Posterior cingulate gyrus (tissue), 11 donors: ENCODE measurements at regions of chr7 and their contacts with region 1.

Region 1: DNA sequence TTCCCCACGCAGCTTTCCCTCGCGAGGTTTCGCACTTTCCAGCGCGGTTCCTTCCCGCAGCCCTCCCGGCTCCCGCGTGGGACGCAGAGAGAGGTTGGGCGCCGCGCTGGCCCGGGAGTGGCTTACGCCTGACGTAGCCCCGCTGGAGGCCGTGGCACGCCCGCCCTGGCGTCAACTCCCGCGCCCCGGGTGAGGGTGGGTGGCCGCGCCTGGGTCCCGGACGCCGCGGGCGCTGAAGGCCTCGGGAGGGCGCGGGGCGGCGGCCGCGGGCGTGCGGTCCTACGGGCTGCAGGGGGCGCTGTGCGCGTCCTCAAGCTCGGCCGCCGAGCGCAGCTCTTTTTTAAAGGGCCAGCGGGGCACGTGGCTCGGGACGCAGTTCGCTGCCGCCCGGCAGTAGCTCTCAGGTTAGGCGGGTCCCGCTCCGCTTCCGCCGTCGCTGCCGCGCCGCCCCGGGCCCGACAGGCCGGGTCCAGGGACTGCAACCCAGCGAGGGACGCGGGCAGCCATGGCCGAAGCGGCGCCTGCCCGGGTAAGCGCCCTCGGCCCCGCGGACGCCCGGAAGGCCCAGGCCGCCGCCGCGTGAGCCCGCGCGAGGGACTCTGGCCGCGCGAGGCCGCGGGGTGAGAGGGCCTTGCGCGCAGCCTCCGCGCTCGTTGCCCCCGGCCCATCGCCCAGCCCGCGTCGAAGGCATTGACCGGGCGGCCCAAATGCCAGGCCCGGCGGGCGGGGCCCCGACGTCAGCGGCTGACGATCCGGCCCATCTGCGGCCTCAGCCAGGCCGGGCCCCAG is at the start of gene ZNF783:
- DNase-seq: peak; percentile 72 to 97 (median 82)

Region 2: DNA sequence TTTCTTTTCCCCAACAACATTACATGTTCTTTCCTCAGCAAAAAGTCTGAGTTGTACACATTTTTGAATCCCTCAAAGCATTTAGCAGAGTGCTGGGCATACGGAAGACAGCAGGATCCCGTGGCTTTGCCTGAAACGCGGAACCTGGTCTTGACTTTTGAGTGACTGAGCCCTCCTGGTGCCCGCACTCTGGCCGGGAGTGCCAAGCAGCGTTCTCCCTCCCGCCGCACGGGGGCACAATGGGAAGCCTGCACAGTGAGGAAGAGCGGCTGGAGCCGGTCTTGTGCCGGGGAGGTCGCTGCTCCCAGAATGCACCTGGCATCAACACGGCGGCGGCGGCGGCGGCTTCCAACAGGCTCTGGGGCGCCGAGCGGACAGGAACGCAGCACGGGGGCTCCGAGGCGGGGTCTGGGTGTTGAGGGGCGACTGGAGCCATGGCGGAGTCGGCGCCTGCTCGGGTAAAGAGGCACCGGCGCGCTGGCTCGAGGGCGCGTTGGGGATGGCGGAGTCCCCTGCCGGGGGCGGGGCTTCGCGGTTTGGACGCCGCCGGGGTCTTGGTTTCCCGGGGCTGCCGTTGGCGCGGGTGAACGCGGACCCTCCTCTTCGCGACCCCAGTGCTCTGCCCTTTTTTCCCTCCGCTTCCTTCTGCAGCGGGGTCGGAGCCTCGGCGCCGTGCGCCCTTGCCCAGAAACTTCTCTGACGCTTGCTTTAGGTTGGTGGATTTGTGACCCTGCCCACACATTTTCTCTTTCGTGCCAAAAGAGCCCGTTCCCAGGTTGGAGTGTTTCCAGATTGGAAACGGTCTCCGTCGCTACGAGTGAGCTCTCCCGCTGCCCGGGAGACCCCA is 22.5 kb before region 1 on chr7 and contains the start of gene ZNF212:
- intact Hi-C with region 1: loop called (anchors 1 kb)
- DNase-seq: peak; percentile 82 to 98 (median 92)

Region 3: GRCh38 chr7:149497456-149498261 is 235.6 kb after region 1 on chr7 and contains the start of gene ZNF746:
- intact Hi-C with region 1: loop called (anchors 10 kb)
- DNase-seq: peak; percentile 52 to 97 (median 80)

Region 4: DNA sequence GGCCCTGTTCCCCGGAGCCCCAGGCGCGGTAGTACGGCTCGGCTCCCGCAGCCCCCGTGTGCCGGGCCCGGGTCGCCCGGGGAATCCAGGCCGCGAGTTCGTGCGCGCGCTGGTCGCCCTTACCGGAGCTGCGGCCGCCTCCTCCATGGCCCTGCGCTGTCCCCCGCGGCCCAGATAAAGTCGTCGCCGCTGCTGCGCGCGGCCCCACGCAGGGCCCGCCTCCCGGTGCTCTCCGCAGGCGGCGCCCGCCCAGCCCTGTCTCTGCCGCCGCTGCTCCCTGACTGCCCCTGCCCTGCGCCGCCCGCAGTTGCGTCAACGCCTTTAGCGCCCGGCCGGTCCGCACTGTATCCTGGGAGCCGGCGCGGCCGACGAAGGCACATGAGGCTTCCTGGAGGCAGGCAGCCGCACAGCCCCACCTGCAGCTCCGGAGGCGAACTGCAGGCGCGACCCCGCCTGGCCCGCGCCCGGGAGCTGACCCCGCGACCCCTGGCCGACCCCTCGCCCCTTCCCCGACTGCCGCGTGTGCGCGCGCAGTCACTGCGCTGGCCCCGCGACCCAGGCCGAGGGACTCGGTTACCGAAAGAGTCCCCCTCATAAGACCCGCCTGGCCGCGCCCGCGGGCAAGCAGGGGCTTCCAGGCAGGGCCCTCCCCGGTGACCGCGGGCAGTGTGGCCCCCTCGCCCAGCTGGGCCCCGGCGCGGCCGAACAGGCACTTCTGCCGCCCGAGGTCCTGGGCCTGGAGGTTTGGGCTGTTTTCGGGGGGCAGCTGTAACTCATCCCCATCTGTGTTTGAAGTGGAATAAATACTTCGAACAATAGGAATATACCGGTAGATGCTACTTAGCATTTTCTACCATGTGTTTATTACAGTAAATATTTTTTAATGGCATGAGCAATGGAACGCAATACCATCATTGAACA is 362.7 kb after region 1 on chr7:
- intact Hi-C with region 1: loop called (anchors 10 kb)
- DNase-seq: peak; percentile 82 to 99 (median 92)

Region 5: GRCh38 chr7:149714050-149714909 is 452.3 kb after region 1 on chr7:
- intact Hi-C with region 1: loop called (anchors 10 kb)
- DNase-seq: peak; percentile 81 to 97 (median 86)